Right lobe of liver (tissue), 6 donors: ENCODE measurements at regions of chr11 and their contacts with region 1.

Region 1: DNA sequence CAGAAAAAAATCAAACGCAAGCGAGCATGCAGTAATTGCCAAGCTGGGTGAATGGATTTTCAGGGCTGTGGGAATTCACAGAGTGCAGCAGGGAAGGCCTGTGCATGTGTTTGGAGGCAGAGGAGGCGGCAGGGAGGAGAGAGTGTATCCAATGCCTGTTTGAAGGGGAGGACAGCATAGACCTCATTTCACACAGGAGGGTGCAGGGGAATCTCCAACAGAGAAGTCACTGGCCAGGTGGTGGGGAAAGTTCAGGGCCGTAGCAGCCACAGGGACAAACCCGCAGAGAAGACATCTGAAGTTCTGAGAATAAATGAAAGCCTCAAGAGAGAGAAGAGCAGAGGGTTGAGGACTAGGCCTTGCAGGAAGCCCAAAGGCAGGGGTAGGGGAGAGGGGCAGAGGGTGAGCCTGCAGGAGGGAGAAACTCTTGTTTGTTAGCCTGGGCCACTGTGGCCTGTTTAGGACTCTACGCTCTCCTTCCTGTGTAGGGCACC is 19.2 kb upstream of the KDM2A start:
- DNase-seq: no peak
- ATAC-seq: peak in 1 of 4 donors; percentile 19
- H3K4me3 ChIP-seq: no peak overlapping the region
- H3K27ac ChIP-seq: no peak overlapping the region
- H3K4me1 ChIP-seq: peaks cover 0 to 3% (median 0%) of the 10 kb centered on the region in 4 donors
- H3K27me3 ChIP-seq: no peaks in the 10 kb centered on the region
- CTCF ChIP-seq: no peak
- POLR2A ChIP-seq: no peak

Region 2: GRCh38 chr11:67022328-67022927 is 77.5 kb before region 1 on chr11:
- intact Hi-C with region 1: no loop called
- DNase-seq: peak in 2 of 3 donors; percentile 62 to 89
- ATAC-seq: peak in 3 of 4 donors; percentile 47 to 78 (median 51)
- H3K4me3 ChIP-seq: peak overlapping the region; percentile 27 to 56 (median 41)
- H3K27ac ChIP-seq: peak overlapping the region in 1 of 3 donors; percentile 43
- H3K4me1 ChIP-seq: peaks cover 0 to 19% (median 6%) of the 10 kb centered on the region in 4 donors
- H3K27me3 ChIP-seq: no peaks in the 10 kb centered on the region
- CTCF ChIP-seq: no peak
- POLR2A ChIP-seq: no peak

Region 3: GRCh38 chr11:67053896-67054842 is 45.7 kb before region 1 on chr11:
- intact Hi-C with region 1: no loop called
- DNase-seq: peak; percentile 75 to 81 (median 81)
- ATAC-seq: peak; percentile 53 to 70 (median 62)
- H3K4me3 ChIP-seq: no peak overlapping the region
- H3K27ac ChIP-seq: peak overlapping the region; percentile 76 to 88 (median 83)
- H3K4me1 ChIP-seq: peaks cover 0 to 51% (median 27%) of the 10 kb centered on the region in 4 donors
- H3K27me3 ChIP-seq: no peaks in the 10 kb centered on the region
- CTCF ChIP-seq: peak; percentile 49 to 69 (median 65)
- POLR2A ChIP-seq: no peak

Region 4: DNA sequence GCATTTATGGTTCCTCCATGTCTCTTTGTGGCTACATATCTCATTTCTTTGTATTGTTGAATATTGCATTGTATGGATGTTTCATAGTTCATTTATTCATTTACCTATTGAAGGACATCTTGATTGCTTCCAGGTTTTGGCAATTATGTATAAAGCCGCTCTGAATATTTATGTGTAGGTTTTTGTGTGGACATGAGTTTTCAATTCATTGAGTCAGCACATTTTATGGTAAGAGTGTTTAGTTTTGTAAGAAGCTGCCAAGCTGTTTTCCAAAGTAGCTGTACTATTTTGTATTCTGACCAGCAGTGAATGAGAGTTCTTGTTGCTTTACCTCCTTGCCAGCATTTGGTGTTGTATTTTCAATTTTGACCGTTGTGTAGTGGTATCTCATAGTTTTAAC is 58.3 kb after region 1 on chr11:
- intact Hi-C with region 1: loop called in 1 of 2 experiments (anchors 10 kb)
- DNase-seq: no peak
- ATAC-seq: no peak
- H3K4me3 ChIP-seq: no peak overlapping the region
- H3K27ac ChIP-seq: no peak overlapping the region
- H3K4me1 ChIP-seq: peaks cover 0 to 10% (median 0%) of the 10 kb centered on the region in 4 donors
- H3K27me3 ChIP-seq: no peaks in the 10 kb centered on the region
- CTCF ChIP-seq: no peak
- POLR2A ChIP-seq: no peak